ENCODE measurements at regions of chr16 and their contacts with region 1.

Region 1: DNA sequence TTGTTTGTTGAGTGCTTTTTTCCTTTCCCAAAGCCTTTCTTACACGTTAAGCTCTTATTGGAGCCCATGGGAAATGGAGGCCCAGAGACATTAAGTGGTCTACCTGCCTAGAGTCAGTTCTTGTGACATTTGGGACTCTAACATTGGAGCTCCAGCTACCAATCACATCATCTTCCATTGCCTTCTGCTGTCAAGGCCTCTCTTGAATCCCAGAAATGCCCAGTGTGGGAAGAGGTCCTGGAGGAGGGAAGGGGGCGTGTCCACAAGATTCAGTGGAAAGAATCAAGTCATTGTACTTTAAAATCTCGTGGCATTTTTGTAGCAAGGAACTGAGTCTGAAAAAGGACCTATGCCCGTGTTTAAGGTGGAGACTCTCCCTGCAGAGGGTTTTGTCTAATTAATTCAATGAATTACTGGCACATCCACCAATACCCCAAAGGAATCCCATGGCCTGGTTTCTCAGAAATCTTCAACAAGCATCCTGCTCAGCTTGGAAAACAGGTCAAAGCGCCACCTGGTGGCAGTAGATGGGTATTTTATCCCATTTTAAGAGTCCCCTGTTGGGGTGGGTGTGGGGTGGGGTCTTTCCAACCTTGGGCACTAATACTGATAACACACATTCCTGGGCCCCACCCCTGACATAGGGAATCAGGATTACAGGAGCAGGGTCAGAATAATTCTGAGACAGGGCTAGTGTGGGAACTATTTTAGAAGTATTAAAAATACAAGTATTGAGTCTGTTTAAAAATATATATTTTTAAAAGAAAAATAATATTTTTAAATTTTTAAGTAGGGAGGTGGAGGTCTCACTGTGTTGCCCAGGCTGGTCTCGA is 24.6 kb downstream of the GPT2 start:
- DNase-seq: peak; percentile 66
- H3K4me3 ChIP-seq: no peak overlapping the region
- H3K27ac ChIP-seq: no peak overlapping the region
- H3K4me1 ChIP-seq: no peaks in the 10 kb centered on the region
- H3K27me3 ChIP-seq: no peaks in the 10 kb centered on the region
- CTCF ChIP-seq: peak; percentile 42 to 61
- POLR2A ChIP-seq: no peak

Region 2: DNA sequence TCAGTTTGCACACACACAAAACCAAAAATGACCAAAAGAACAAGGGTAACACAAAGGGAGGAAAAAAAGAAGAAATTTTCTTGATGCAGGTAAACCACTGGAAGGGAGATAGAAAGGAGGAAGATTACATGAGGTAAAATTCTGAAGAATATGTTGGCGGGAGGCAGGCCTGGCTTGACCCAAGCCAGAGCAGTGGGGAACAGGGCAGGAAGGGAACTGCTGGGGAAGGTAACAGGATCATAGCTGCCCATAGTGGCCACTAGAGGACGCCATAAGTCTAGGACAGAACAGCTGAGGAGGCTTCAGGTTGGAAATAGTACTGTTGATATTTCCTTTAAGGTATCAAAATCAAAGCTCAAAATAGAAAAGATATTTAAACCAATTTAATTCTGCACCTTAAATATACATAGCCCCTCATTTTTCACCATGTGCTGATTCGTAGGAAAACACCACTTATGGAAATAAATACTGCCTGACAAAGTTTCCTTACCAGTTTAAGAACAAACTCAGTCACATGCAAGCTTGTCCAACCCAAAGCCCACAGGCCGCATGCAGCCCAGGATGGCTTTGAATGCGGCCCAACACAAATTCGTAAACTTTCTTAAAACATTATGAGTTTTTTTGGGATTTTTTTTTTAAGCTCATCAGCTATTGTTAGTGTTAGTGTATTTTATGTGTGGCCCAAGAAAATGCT is 235.3 kb before region 1 on chr16:
- CTCF ChIA-PET with region 1: interaction called, 20 read pairs
- POLR2A ChIA-PET with region 1: no interaction called
- dilution Hi-C with region 1: no loop called
- intact Hi-C with region 1: no loop called
- DNase-seq: peak; percentile 62
- H3K4me3 ChIP-seq: no peak overlapping the region
- H3K27ac ChIP-seq: no peak overlapping the region
- H3K4me1 ChIP-seq: no peaks in the 10 kb centered on the region
- H3K27me3 ChIP-seq: no peaks in the 10 kb centered on the region
- CTCF ChIP-seq: peak; percentile 85 to 91
- POLR2A ChIP-seq: no peak

Region 3: DNA sequence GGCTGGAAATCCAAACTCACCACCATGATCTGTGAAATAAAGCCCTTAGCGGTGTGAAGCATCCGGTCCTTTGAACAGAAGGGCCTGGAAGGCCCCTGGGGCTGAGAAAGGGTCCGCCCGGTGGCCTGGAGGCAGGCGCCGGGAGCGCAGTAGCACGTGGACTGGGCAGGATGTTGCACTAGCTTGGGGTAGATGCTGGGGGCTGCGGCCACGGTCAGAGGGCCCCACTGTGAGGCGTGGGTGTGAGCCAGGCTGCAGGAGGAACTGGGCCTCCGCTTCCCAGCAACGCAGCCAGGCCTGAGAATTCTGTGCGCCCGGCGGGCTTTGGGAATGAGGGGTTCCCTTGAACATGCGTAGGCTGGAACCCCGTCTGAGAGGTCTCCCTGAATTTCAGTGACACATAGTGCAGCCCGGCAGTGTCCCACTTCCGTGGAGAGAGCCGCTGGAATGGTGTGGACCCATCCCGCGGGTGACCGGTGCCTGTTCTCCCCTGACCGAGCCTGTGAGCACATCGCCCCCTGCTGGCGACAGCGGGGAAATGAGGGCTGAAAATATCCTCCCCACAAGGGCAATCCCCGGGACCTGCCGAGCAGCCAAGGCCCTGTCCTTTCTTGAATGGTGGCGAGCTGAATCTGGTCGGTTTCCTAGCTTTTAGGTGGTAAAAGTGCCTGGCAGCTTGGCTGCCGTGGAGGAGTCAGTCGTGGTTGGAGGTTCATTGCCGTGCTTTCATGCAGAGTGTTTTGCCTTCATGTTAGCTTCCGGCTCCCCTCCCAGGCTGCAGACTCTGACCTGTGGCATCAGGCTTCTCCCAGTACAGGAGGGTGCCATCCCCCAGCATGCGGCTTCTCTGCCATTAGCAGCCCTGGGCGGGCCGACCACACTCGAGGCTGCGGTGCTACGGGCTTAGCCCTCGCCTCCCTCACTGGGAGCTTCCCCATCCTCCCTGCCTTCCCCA is 20.9 kb after region 1 on chr16:
- CTCF ChIA-PET with region 1: interaction called, 7 read pairs
- POLR2A ChIA-PET with region 1: no interaction called
- dilution Hi-C with region 1: no loop called
- intact Hi-C with region 1: loop called (anchors 2 kb)
- DNase-seq: peak; percentile 46
- H3K4me3 ChIP-seq: no peak overlapping the region
- H3K27ac ChIP-seq: no peak overlapping the region
- H3K4me1 ChIP-seq: no peaks in the 10 kb centered on the region
- H3K27me3 ChIP-seq: no peaks in the 10 kb centered on the region
- CTCF ChIP-seq: peak; percentile 84 to 90
- POLR2A ChIP-seq: no peak